Caco-2 (cell line): ENCODE measurements at regions of chr7 and their contacts with region 1.

Region 1: GRCh38 chr7:149028346-149029109 is at the start of gene PDIA4:
- DNase-seq: peak; percentile 100
- H3K4me3 ChIP-seq: peak within 1 kb of the TSS; percentile 69
- H3K4me3 Mint-ChIP-seq: peak within 1 kb of the TSS; percentile 78
- H3K27ac Mint-ChIP-seq: peak within 1 kb of the TSS; percentile 68
- H3K4me1 ChIP-seq: no peaks in the 10 kb centered on the region
- H3K4me1 Mint-ChIP-seq: peaks cover 13% of the 10 kb centered on the region
- H3K27me3 ChIP-seq: no peaks in the 10 kb centered on the region
- H3K27me3 Mint-ChIP-seq: no peaks in the 10 kb centered on the region
- CTCF ChIP-seq: peak in 1 of 2 experiments; percentile 16
- total RNA-seq, gene PDIA4: 192 and 197 TPM in 2 replicates

Region 2: GRCh38 chr7:149067876-149068275 is 39.3 kb after region 1 on chr7:
- CTCF ChIA-PET with region 1: interaction called, 5 read pairs
- POLR2A ChIA-PET with region 1: interaction called, 7 read pairs
- intact Hi-C with region 1: loop called (anchors 1 kb)
- DNase-seq: peak in 1 of 2 experiments; percentile 13
- H3K4me3 ChIP-seq: no peak overlapping the region
- H3K4me3 Mint-ChIP-seq: no peak overlapping the region
- H3K27ac Mint-ChIP-seq: no peak overlapping the region
- H3K4me1 ChIP-seq: peaks cover 3% of the 10 kb centered on the region; the same call in 1 of the 2 replicates
- H3K4me1 Mint-ChIP-seq: no peaks in the 10 kb centered on the region
- H3K27me3 ChIP-seq: no peaks in the 10 kb centered on the region
- H3K27me3 Mint-ChIP-seq: no peaks in the 10 kb centered on the region
- CTCF ChIP-seq: no peak

Region 3: GRCh38 chr7:149125863-149126661 is 97.5 kb after region 1 on chr7 and contains the start of gene ZNF425:
- CTCF ChIA-PET with region 1: no interaction called
- POLR2A ChIA-PET with region 1: no interaction called
- intact Hi-C with region 1: loop called (anchors 1 kb)
- DNase-seq: peak; percentile 93 to 97
- H3K4me3 ChIP-seq: peak within 1 kb of the TSS; percentile 74
- H3K4me3 Mint-ChIP-seq: peak within 1 kb of the TSS; percentile 75
- H3K27ac Mint-ChIP-seq: peak within 1 kb of the TSS; percentile 84
- H3K4me1 ChIP-seq: peaks cover 7% of the 10 kb centered on the region; the same call in 1 of the 2 replicates
- H3K4me1 Mint-ChIP-seq: peaks cover 11% of the 10 kb centered on the region
- H3K27me3 ChIP-seq: no peaks in the 10 kb centered on the region
- H3K27me3 Mint-ChIP-seq: no peaks in the 10 kb centered on the region
- CTCF ChIP-seq: peak; percentile 94
- total RNA-seq, gene ZNF425: 2.6 and 4.0 TPM in 2 replicates

Region 4: DNA sequence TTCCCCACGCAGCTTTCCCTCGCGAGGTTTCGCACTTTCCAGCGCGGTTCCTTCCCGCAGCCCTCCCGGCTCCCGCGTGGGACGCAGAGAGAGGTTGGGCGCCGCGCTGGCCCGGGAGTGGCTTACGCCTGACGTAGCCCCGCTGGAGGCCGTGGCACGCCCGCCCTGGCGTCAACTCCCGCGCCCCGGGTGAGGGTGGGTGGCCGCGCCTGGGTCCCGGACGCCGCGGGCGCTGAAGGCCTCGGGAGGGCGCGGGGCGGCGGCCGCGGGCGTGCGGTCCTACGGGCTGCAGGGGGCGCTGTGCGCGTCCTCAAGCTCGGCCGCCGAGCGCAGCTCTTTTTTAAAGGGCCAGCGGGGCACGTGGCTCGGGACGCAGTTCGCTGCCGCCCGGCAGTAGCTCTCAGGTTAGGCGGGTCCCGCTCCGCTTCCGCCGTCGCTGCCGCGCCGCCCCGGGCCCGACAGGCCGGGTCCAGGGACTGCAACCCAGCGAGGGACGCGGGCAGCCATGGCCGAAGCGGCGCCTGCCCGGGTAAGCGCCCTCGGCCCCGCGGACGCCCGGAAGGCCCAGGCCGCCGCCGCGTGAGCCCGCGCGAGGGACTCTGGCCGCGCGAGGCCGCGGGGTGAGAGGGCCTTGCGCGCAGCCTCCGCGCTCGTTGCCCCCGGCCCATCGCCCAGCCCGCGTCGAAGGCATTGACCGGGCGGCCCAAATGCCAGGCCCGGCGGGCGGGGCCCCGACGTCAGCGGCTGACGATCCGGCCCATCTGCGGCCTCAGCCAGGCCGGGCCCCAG is 233.5 kb after region 1 on chr7 and contains the start of gene ZNF783:
- CTCF ChIA-PET with region 1: no interaction called
- POLR2A ChIA-PET with region 1: no interaction called
- intact Hi-C with region 1: loop called (anchors 2 kb)
- DNase-seq: peak; percentile 87 to 91
- H3K4me3 ChIP-seq: peak within 1 kb of the TSS; percentile 65
- H3K4me3 Mint-ChIP-seq: peak within 1 kb of the TSS; percentile 84
- H3K27ac Mint-ChIP-seq: peak within 1 kb of the TSS; percentile 94
- H3K4me1 ChIP-seq: no peaks in the 10 kb centered on the region
- H3K4me1 Mint-ChIP-seq: peaks cover 8% of the 10 kb centered on the region
- H3K27me3 ChIP-seq: no peaks in the 10 kb centered on the region
- H3K27me3 Mint-ChIP-seq: no peaks in the 10 kb centered on the region
- CTCF ChIP-seq: peak; percentile 58 to 90
- total RNA-seq, gene ZNF783: 26.1 and 27.3 TPM in 2 replicates